ENCODE measurements at regions of chr2 and their contacts with region 1.

Region 1: GRCh38 chr2:11129598-11130449 is 25.4 kb upstream of the SLC66A3 start:
- DNase-seq: no peak
- ATAC-seq: no peak
- H3K4me3 ChIP-seq: peak overlapping the region; percentile 34 to 51 (median 40)
- H3K27ac ChIP-seq: peak overlapping the region in 1 of 4 donors; percentile 4
- H3K4me1 ChIP-seq: peaks cover 19 to 21% of the 10 kb centered on the region in 2 donors
- H3K27me3 ChIP-seq: no peaks in the 10 kb centered on the region
- CTCF ChIP-seq: peak in 1 of 5 experiments; percentile 6
- POLR2A ChIP-seq: no peak

Region 2: DNA sequence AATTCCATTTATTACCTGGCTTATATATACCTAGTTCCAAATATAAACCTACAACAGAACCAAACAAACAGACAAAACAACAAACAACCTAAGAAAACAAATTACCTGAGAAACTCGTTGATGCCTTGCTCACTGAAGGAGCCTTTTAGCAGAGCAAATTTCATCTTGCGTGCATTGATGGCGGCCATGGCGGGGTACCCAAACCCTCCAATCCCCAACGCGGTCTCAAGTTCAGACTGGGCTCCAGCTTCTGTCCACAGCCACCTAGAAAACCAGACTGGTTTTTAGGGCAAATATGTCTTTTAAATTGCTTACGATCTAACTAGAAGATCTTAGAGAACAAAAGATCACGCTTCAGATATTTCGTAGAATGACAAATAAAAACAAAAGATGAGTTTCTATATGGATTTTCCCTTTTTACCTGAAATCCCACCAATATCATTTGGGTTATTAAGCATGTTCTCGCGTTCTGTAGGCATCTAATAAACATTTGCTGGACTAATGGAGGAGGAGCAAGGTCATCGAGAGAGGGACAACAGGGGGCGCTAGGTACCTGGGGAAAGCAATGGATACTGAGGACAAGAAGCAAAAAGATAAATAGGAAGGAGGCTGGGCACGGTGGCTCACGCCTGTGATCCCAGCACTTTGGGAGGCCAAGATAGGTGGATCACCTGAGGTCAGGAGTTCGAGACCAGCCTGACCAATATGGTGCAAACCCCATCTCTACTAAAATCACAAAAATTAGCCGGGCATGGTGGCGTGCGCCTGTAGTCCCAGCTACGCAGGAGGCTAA is 342.5 kb before region 1 on chr2:
- in situ Hi-C with region 1: no loop called
- intact Hi-C with region 1: no loop called
- DNase-seq: no peak
- ATAC-seq: no peak
- H3K4me3 ChIP-seq: no peak overlapping the region
- H3K27ac ChIP-seq: no peak overlapping the region
- H3K4me1 ChIP-seq: peaks cover 0 to 1% of the 10 kb centered on the region in 2 donors
- H3K27me3 ChIP-seq: no peaks in the 10 kb centered on the region
- CTCF ChIP-seq: no peak
- POLR2A ChIP-seq: no peak

Region 3: GRCh38 chr2:11073251-11073650 is 56.6 kb before region 1 on chr2:
- in situ Hi-C with region 1: no loop called
- intact Hi-C with region 1: no loop called
- DNase-seq: no peak
- ATAC-seq: no peak
- H3K4me3 ChIP-seq: no peak overlapping the region
- H3K27ac ChIP-seq: no peak overlapping the region
- H3K4me1 ChIP-seq: no peaks in the 10 kb centered on the region
- H3K27me3 ChIP-seq: peaks cover 0 to 8% (median 3%) of the 10 kb centered on the region in 3 donors
- CTCF ChIP-seq: no peak
- POLR2A ChIP-seq: no peak

Region 4: GRCh38 chr2:11154923-11155380 is 25.1 kb after region 1 on chr2:
- in situ Hi-C with region 1: no loop called
- intact Hi-C with region 1: loop called (anchors 1 kb)
- DNase-seq: peak; percentile 97 to 99
- ATAC-seq: peak; percentile 73 to 81
- H3K4me3 ChIP-seq: peak overlapping the region; percentile 54 to 82 (median 74)
- H3K27ac ChIP-seq: peak overlapping the region; percentile 87 to 96 (median 91)
- H3K4me1 ChIP-seq: peaks cover 3 to 5% of the 10 kb centered on the region in 2 donors
- H3K27me3 ChIP-seq: no peaks in the 10 kb centered on the region
- CTCF ChIP-seq: no peak
- POLR2A ChIP-seq: no peak

Region 5: GRCh38 chr2:11234309-11234708 is 104.5 kb after region 1 on chr2:
- in situ Hi-C with region 1: no loop called
- intact Hi-C with region 1: loop called (anchors 10 kb)
- DNase-seq: no peak
- ATAC-seq: peak; percentile 28 to 47
- H3K4me3 ChIP-seq: no peak overlapping the region
- H3K27ac ChIP-seq: peak overlapping the region in 1 of 4 donors; percentile 48
- H3K4me1 ChIP-seq: peaks cover 24 to 33% of the 10 kb centered on the region in 2 donors
- H3K27me3 ChIP-seq: no peaks in the 10 kb centered on the region
- CTCF ChIP-seq: peak; percentile 46 to 60 (median 57)
- POLR2A ChIP-seq: no peak

Region 6: GRCh38 chr2:11411768-11412448 is 282.1 kb after region 1 on chr2:
- in situ Hi-C with region 1: loop called in 3 of 4 experiments (anchors 10 to 25 kb)
- intact Hi-C with region 1: loop called (anchors 2 kb)
- DNase-seq: peak; percentile 20 to 33
- ATAC-seq: peak in 1 of 2 donors; percentile 60
- H3K4me3 ChIP-seq: peak overlapping the region; percentile 32 to 62 (median 37)
- H3K27ac ChIP-seq: no peak overlapping the region
- H3K4me1 ChIP-seq: peaks cover 12 to 29% of the 10 kb centered on the region in 2 donors
- H3K27me3 ChIP-seq: no peaks in the 10 kb centered on the region
- CTCF ChIP-seq: peak; percentile 78 to 87 (median 81)
- POLR2A ChIP-seq: no peak

Region 7: GRCh38 chr2:11430729-11431128 is 300.9 kb after region 1 on chr2:
- in situ Hi-C with region 1: no loop called
- intact Hi-C with region 1: no loop called
- DNase-seq: no peak
- ATAC-seq: no peak
- H3K4me3 ChIP-seq: no peak overlapping the region
- H3K27ac ChIP-seq: no peak overlapping the region
- H3K4me1 ChIP-seq: no peaks in the 10 kb centered on the region
- H3K27me3 ChIP-seq: no peaks in the 10 kb centered on the region
- CTCF ChIP-seq: no peak
- POLR2A ChIP-seq: no peak

Region 8: GRCh38 chr2:11446733-11447248 is 317.0 kb after region 1 on chr2:
- in situ Hi-C with region 1: loop called in 1 of 4 experiments (anchors 10 kb)
- intact Hi-C with region 1: loop called (anchors 5 kb)
- DNase-seq: peak; percentile 21 to 54
- ATAC-seq: peak; percentile 73 to 84
- H3K4me3 ChIP-seq: no peak overlapping the region
- H3K27ac ChIP-seq: peak overlapping the region in 3 of 4 donors; percentile 13 to 55 (median 51)
- H3K4me1 ChIP-seq: no peaks in the 10 kb centered on the region
- H3K27me3 ChIP-seq: no peaks in the 10 kb centered on the region
- CTCF ChIP-seq: peak; percentile 74 to 91 (median 87)
- POLR2A ChIP-seq: no peak

Region 9: DNA sequence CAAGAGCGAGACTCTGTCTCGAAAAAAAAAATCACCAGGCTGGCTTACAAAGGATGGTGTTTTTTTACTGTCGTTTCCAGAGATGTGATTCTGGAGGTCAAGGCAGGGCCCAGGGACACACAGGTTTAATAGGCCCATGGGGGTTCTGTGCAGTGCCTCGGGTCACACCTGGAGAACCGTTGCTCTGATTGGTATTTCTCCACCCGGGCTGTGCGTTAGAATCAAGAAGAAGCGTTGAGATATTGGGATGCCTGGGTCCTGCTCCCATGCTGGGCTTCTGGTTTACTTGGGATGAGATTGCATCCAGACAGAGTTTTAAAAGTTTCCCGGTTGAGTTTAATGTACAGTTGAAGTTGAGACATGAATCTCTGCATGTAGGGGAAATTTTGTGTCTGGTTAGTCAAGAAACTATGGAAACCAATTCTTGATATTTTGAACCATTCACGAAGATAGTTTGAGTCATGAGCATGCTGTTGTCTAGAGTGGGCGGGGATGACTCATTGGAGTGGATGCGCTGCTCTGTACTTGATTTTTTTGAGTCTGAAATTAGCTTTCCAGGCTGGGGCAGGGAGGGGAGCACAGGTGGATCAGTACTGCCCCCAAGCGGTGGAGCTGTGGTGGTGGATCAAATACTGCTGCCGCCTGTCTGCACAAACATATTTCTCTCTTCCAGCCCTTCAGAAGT is 454.2 kb after region 1 on chr2:
- in situ Hi-C with region 1: loop called in 3 of 4 experiments (anchors 25 kb)
- intact Hi-C with region 1: loop called (anchors 5 kb)
- DNase-seq: peak; percentile 45 to 70
- ATAC-seq: peak; percentile 47 to 59
- H3K4me3 ChIP-seq: no peak overlapping the region
- H3K27ac ChIP-seq: peak overlapping the region; percentile 57 to 75 (median 61)
- H3K4me1 ChIP-seq: peaks cover 5 to 17% of the 10 kb centered on the region in 2 donors
- H3K27me3 ChIP-seq: no peaks in the 10 kb centered on the region
- CTCF ChIP-seq: peak; percentile 79 to 88 (median 84)
- POLR2A ChIP-seq: no peak

Measured in gastrocnemius medialis (tissue), 4 donors.